Mammary epithelial cell (primary cell): ENCODE measurements at regions of chr16 and their contacts with region 1.

Region 1: DNA sequence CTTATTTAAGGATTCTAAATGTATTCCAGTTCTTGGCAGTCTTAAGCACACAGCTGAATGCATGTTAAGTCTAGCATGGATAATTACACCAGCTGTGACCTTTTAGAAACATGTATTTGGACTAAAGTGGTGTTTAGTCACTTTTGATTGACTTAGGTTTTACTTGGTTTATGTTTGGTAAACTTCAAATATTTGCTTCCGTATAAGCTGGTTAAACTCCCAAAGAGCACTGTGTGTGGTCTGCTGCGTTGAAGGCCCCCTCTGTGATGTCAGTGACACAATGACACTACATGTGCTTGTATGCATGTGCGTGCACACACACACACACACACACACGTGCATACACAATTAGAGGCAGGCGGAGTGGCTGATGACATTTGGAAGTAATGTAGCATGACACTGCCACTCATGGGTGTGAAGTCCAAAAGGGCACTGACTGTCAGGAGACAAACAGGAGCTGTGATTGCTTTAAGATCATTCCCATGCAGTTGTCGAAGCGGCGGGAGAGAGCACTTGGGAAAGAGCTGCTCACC is 156.1 kb upstream of the CDH13 start:
- DNase-seq: no peak
- H3K4me3 ChIP-seq: no peak overlapping the region
- H3K27ac ChIP-seq: no peak overlapping the region
- H3K4me1 ChIP-seq: no peaks in the 10 kb centered on the region
- H3K27me3 ChIP-seq: no peaks in the 10 kb centered on the region
- CTCF ChIP-seq: no peak

Region 2: DNA sequence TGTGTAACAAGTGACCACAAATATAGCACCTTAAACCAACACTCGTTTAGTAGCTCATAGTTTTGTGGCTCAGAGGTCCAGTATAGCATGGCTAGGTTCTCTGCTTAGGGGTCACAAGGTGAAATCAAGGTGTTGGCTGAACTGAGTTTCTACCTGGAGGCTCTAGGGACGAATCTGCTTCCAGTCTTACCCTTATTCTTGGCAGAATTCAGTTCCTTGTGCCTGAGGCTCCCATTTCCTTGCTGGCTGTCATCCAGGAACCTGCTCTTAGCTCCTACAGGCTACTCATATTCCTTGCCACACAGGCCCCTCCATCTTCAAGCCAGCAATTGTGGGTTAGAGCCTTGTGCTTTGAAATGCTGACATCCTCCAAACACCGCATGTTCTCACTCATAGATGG is 56.2 kb before region 1 on chr16:
- CTCF ChIA-PET with region 1: no interaction called
- dilution Hi-C with region 1: no loop called
- in situ Hi-C with region 1: loop called in 1 of 2 experiments (anchors 10 kb)
- intact Hi-C with region 1: no loop called
- DNase-seq: no peak
- H3K4me3 ChIP-seq: no peak overlapping the region
- H3K27ac ChIP-seq: no peak overlapping the region
- H3K4me1 ChIP-seq: no peaks in the 10 kb centered on the region
- H3K27me3 ChIP-seq: peaks cover 1% of the 10 kb centered on the region
- CTCF ChIP-seq: no peak

Region 3: DNA sequence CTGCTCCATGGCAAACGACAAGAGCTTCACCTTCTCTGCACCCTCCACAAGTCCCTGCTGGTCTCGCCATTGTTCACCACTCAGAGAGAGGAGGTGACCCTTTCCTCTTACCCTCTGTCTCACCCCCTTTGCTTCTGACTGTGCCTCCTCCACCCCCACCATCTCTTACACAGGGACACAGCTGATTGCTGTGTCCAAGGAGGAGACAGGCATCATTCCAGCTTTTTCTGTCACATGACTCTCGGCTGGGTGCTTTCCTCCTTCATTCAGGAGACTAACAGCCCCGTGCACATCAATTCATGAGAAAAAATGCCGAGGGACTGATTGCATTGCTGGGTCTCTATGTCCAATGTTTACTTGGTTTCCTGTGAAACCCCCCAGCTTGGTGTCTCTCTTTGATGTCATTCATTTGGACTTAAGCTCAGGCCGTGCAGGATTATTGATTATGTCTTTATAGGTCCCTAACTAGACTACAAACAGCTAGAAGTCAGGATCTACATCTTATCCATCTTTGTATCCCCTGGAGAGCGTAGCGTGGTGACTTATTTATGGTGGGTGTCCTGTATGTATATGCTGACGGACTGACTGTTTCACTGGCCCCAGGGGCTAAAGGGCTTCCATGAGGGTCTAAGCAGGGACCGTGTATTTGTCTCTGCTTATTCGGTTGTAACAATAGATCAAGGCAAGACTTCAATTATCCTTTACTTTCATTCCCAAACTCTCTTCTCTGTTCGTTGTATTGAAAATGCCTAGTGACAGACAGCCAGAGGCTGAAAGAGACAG is 73.9 kb after region 1 on chr16:
- CTCF ChIA-PET with region 1: no interaction called
- dilution Hi-C with region 1: no loop called
- in situ Hi-C with region 1: no loop called
- intact Hi-C with region 1: no loop called
- DNase-seq: no peak
- H3K4me3 ChIP-seq: no peak overlapping the region
- H3K27ac ChIP-seq: no peak overlapping the region
- H3K4me1 ChIP-seq: no peaks in the 10 kb centered on the region
- H3K27me3 ChIP-seq: peaks cover 22% of the 10 kb centered on the region
- CTCF ChIP-seq: no peak